ENCODE measurements at regions of chr1 and their contacts with region 1.

Region 1: DNA sequence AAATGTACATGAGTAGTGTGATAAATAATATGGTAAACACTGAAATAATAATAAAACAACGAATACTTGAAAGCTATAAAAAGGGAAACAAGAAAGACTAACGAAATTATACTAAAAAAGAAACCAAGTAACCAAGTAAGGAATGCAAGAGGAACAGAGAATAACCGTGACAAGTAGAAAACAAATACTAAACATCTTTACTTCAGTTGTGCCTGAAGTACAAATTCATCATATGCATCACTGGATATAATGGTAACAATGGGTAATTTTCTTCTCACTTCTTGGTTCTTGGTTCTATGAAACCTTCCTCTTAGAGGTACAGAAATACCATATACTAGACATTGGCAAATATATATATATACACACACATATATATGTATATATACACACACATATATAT is 1093.6 kb upstream of the B3GALT2 start:
- DNase-seq: peak; percentile 40
- ATAC-seq: no peak
- H3K4me3 ChIP-seq: no peak overlapping the region
- H3K4me3 Mint-ChIP-seq: no peak overlapping the region
- H3K27ac ChIP-seq: no peak overlapping the region
- H3K27ac Mint-ChIP-seq: no peak overlapping the region
- H3K4me1 ChIP-seq: peaks cover 3 to 8% of the 10 kb centered on the region in 2 donors
- H3K4me1 Mint-ChIP-seq: peaks cover 20% of the 10 kb centered on the region
- H3K27me3 ChIP-seq: no peaks in the 10 kb centered on the region
- H3K27me3 Mint-ChIP-seq: peaks cover 7% of the 10 kb centered on the region
- CTCF ChIP-seq: no peak

Region 2: GRCh38 chr1:194225821-194226220 is 54.2 kb before region 1 on chr1:
- CTCF ChIA-PET with region 1: no interaction called
- POLR2A ChIA-PET with region 1: no interaction called
- intact Hi-C with region 1: loop called (anchors 5 kb)
- DNase-seq: peak; percentile 39
- ATAC-seq: peak; percentile 33
- H3K4me3 ChIP-seq: no peak overlapping the region
- H3K4me3 Mint-ChIP-seq: no peak overlapping the region
- H3K27ac ChIP-seq: no peak overlapping the region
- H3K27ac Mint-ChIP-seq: no peak overlapping the region
- H3K4me1 ChIP-seq: peaks cover 6 to 10% of the 10 kb centered on the region in 2 donors
- H3K4me1 Mint-ChIP-seq: peaks cover 10% of the 10 kb centered on the region
- H3K27me3 ChIP-seq: peaks cover 0 to 32% (median 11%) of the 10 kb centered on the region in 4 experiments
- H3K27me3 Mint-ChIP-seq: peaks cover 31% of the 10 kb centered on the region
- CTCF ChIP-seq: no peak

Measured in B cell (primary cell).